AG04450 (cell line): ENCODE measurements at regions of chr12 and their contacts with region 1.

Region 1: GRCh38 chr12:69900720-69901131 is 75.7 kb downstream of the MYRFL start:
- DNase-seq: no peak
- H3K4me3 ChIP-seq: no peak overlapping the region
- H3K27ac ChIP-seq: no peak overlapping the region
- H3K27me3 ChIP-seq: no peaks in the 10 kb centered on the region
- CTCF ChIP-seq: peak; percentile 76

Region 2: GRCh38 chr12:69879041-69879960 is 21.4 kb before region 1 on chr12:
- CTCF ChIA-PET with region 1: interaction called, 60 read pairs
- POLR2A ChIA-PET with region 1: no interaction called
- DNase-seq: peak; percentile 43
- H3K4me3 ChIP-seq: no peak overlapping the region
- H3K27ac ChIP-seq: no peak overlapping the region
- H3K27me3 ChIP-seq: peaks cover 7% of the 10 kb centered on the region
- CTCF ChIP-seq: peak; percentile 94

Region 3: DNA sequence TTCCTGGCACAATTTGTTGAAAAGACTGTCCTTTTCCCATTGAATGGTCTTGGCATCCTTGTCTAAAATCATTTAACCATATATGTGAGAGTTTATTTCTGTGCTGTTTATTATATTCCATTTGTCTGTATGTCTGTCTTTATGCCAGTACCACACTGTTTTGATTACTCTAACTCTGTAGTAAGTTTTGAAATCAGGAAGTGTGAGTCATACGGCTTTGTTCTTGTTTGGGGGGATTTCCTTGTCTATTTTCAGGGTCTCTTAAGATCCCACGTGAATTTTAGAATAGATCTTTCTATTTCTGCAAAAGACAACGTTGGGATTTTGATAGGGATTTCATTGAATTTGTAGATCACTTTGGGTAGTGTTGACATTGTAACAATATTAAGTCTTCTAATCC is 12.8 kb after region 1 on chr12:
- CTCF ChIA-PET with region 1: interaction called, 19 read pairs
- POLR2A ChIA-PET with region 1: no interaction called
- DNase-seq: no peak
- H3K4me3 ChIP-seq: no peak overlapping the region
- H3K27ac ChIP-seq: no peak overlapping the region
- H3K27me3 ChIP-seq: peaks cover 2% of the 10 kb centered on the region
- CTCF ChIP-seq: no peak

Region 4: DNA sequence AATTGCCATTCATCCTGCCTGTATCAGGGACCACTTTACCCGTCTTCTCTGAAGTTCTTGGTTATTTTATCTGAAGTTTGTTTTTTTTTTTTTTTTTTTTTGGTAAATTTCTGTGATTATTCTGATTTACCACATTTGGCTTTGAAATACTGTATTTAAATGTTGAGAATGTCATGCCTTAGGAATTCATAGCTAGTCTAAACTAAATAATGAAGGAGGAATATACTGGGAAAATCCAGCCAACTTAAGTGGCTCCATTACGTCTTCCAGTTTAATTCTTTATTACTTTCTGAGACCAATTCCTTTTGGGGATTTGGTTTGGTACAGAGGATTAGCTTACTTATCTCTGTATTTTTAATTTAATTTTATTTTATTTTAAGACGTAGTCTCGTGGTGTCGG is 405.1 kb after region 1 on chr12:
- CTCF ChIA-PET with region 1: interaction called, 15 read pairs
- POLR2A ChIA-PET with region 1: no interaction called
- DNase-seq: peak; percentile 1
- H3K4me3 ChIP-seq: no peak overlapping the region
- H3K27ac ChIP-seq: no peak overlapping the region
- H3K27me3 ChIP-seq: no peaks in the 10 kb centered on the region
- CTCF ChIP-seq: no peak

Region 5: GRCh38 chr12:70584301-70584700 is 683.6 kb after region 1 on chr12:
- CTCF ChIA-PET with region 1: interaction called, 33 read pairs
- POLR2A ChIA-PET with region 1: no interaction called
- DNase-seq: no peak
- H3K4me3 ChIP-seq: no peak overlapping the region
- H3K27ac ChIP-seq: no peak overlapping the region
- H3K27me3 ChIP-seq: no peaks in the 10 kb centered on the region
- CTCF ChIP-seq: no peak